CD8-positive, alpha-beta T cell (primary cell): ENCODE measurements at regions of chr3 and their contacts with region 1.

Region 1: DNA sequence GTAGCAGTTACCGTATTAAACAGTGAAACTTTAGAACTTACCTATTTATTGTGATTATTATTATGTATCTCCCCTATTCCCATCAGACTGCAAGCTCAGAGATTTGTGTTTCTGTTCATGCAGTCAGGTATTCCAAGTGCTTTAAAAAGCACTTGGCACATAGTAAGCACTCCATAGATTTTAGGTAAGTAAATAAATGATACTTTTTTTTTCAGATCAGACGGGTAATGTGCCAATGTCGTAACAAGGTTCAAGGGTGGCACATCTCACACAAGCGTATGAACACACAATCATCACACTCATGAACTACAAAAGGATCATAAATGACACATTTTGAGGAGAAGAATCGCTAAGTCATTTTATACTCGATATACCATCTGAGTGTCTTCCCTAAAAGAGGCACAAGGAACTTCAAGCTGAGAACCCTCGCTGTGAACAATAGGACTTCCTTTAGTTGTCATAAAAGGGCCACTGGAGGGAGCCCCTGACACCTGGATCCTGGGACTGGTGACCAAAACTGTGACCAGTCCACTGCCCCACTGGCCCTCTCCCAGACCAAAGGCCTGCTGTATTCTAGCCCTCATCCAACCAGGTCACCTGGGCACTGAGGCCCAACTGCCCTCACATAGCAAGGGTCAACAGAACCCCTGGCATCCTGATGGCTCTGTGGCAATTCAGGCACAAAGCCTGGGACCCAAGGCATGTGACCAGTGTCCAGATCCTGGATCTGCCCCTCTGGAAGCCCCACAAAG is 32.1 kb downstream of the KIF9 start:
- DNase-seq: no peak
- ATAC-seq: no peak
- H3K4me3 ChIP-seq: no peak overlapping the region
- H3K4me3 Mint-ChIP-seq: no peak overlapping the region
- H3K27ac ChIP-seq: no peak overlapping the region
- H3K27ac Mint-ChIP-seq: no peak overlapping the region
- H3K4me1 ChIP-seq: no peaks in the 10 kb centered on the region
- H3K4me1 Mint-ChIP-seq: no peaks in the 10 kb centered on the region
- H3K27me3 ChIP-seq: no peaks in the 10 kb centered on the region
- H3K27me3 Mint-ChIP-seq: no peaks in the 10 kb centered on the region
- CTCF ChIP-seq: no peak

Region 2: DNA sequence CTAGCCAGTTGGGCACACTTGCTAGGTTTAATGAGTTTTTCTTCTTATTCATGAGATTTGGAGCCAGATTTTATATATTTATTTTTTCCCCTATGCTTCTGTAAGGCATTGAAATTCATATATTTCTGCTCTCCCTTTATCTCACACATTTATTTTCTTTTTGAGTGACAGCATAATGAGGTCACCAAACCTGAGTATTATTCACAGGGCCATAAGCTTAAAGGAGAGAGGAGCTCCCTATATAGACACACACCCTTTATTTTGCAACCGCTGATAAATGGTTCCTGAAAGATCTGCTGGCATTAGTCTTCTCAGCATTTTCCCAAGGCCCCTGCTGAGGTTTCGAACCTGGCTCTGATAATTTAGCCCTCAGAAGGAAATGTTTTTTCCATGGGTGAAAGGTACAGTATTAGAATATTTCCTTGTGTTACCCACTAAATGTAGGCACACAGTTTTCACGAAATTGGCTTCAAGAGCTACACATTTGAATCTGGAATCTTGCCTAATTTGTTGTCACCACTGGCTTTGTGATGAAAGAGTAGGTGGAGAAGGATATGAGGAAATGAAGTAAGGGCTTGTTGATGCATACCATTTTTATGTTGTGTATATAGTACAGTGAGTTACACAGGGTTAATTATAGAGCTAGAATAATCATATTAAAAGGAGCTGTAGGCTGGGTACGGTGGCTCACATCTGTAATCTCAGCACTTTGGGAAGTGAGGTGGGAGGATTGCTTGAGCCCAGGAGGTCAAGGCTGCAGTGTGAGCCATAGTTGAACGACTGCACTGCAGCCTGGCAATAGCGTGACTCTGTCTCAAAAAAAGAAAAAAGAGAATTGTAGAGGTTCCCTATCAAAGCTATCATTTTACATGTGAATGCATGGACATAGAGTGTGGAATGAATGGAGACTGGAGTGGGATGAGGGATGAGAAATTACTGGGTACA is 38.8 kb after region 1 on chr3:
- CTCF ChIA-PET with region 1: no interaction called
- POLR2A ChIA-PET with region 1: no interaction called
- intact Hi-C with region 1: loop called in 1 of 2 experiments (anchors 1 kb)
- DNase-seq: no peak
- ATAC-seq: no peak
- H3K4me3 ChIP-seq: no peak overlapping the region
- H3K4me3 Mint-ChIP-seq: no peak overlapping the region
- H3K27ac ChIP-seq: no peak overlapping the region
- H3K27ac Mint-ChIP-seq: no peak overlapping the region
- H3K4me1 ChIP-seq: peaks cover 16% of the 10 kb centered on the region
- H3K4me1 Mint-ChIP-seq: peaks cover 47% of the 10 kb centered on the region
- H3K27me3 ChIP-seq: no peaks in the 10 kb centered on the region
- H3K27me3 Mint-ChIP-seq: no peaks in the 10 kb centered on the region
- CTCF ChIP-seq: no peak

Region 3: DNA sequence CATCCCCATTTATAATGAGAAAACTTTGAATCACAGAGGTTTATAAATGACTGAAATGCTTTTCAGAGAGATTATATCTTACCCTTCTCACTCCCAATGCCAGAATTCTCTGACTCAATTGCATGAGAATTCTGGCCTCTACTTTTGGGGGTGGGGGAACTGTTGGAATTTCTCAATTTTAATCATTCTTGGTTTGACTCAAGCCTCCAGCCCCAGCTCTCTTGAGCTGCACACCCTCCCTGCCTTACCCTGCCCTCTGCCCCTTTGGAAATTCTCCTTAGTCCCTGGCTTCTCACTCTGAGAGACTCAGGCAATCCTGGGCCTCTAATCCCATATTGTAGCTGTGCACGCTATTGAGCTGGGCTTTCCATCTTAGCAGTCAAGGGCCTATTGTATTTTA is 1034.6 kb after region 1 on chr3:
- CTCF ChIA-PET with region 1: no interaction called
- POLR2A ChIA-PET with region 1: no interaction called
- intact Hi-C with region 1: no loop called
- DNase-seq: no peak
- ATAC-seq: no peak
- H3K4me3 ChIP-seq: no peak overlapping the region
- H3K4me3 Mint-ChIP-seq: no peak overlapping the region
- H3K27ac ChIP-seq: no peak overlapping the region
- H3K27ac Mint-ChIP-seq: no peak overlapping the region
- H3K4me1 ChIP-seq: no peaks in the 10 kb centered on the region
- H3K4me1 Mint-ChIP-seq: no peaks in the 10 kb centered on the region
- H3K27me3 ChIP-seq: no peaks in the 10 kb centered on the region
- H3K27me3 Mint-ChIP-seq: no peaks in the 10 kb centered on the region
- CTCF ChIP-seq: no peak